Dorsolateral prefrontal cortex (tissue), 120 donors: ENCODE measurements at regions of chr4 and their contacts with region 1.

Region 1: DNA sequence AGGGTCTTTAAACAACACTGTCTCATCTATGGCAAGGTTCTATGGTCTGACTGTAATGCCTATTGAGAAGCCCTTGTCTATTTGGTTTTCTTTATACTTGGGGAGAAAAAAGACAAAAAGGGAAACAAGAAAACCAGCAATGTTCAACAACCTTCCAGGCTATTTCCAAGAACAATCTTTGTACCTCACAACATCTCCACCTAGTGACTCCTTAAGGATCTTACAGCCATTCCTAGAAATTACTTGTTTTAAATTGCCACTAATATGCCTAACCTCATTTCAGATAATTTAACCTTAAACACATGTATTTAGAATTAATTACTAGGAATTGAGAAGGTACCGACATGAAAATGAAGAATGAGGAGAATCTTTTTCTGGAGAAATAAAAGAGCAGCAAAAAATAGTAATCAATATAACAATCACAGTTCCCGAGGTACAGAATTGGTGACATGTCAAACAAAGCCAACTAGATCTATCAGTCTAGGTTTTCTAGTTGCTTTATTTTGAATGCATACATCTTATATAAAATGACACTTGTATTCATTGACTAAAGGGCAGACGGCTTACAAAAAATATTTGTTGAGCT is 1.6 kb upstream of the RBM46 start:
- DNase-seq: no peak
- H3K4me3 ChIP-seq: no peak overlapping the region
- H3K27ac ChIP-seq: no peak overlapping the region
- H3K27me3 ChIP-seq: peaks cover 0 to 27% (median 3%) of the 10 kb centered on the region in 45 donors
- CTCF ChIP-seq: peak in 55 of 56 donors; percentile 36 to 77 (median 60)

Region 2: GRCh38 chr4:153266988-153267387 is 1512.5 kb before region 1 on chr4:
- intact Hi-C with region 1: no loop called
- DNase-seq: no peak
- H3K4me3 ChIP-seq: no peak overlapping the region
- H3K27ac ChIP-seq: peak overlapping the region in 7 of 59 donors; percentile 3 to 65 (median 18)
- H3K27me3 ChIP-seq: no peaks in the 10 kb centered on the region
- CTCF ChIP-seq: no peak

Region 3: DNA sequence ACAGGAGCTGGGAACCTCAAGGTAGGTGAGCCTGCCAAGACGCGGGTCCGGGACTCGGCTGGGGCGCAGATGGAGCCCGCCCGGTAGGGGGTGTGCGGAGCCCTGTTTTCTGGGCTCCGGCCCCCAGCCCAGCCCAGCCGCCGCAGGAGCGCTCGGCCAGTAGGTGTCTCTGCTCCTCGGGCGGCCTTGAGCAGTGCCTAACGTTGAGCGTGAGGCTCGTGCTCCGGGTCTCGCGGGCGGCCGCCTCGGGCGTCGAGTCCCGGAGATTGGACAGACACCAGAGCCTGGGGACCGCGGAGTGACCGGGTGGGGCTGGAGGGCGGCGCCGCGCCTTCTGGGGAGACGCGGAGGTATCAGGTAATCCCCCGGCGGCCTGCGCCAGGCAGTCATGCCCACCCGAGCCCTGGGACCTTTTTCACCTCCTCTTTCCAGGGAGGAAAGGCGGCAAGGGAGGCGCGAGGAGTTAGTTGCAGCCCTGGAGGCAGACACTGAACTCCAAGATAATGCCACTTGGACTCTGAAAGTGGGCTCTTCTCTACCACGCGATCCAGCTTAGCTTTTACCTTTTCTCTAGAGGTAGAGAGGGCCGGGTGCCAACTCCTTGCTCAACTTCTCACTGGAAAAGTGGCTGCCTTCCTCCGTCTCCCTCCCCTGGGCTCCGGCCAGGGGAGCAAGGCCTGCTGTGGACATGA is 152.5 kb before region 1 on chr4:
- intact Hi-C with region 1: loop called in 1 of 2 experiments (anchors 10 kb)
- DNase-seq: peak in 7 of 10 donors; percentile 21 to 69 (median 41)
- H3K4me3 ChIP-seq: peak overlapping the region in 58 of 59 donors; percentile 9 to 69 (median 46)
- H3K27ac ChIP-seq: no peak overlapping the region
- H3K27me3 ChIP-seq: peaks cover 0 to 50% (median 7%) of the 10 kb centered on the region in 45 donors
- CTCF ChIP-seq: peak in 54 of 56 donors; percentile 14 to 77 (median 54)

Region 4: DNA sequence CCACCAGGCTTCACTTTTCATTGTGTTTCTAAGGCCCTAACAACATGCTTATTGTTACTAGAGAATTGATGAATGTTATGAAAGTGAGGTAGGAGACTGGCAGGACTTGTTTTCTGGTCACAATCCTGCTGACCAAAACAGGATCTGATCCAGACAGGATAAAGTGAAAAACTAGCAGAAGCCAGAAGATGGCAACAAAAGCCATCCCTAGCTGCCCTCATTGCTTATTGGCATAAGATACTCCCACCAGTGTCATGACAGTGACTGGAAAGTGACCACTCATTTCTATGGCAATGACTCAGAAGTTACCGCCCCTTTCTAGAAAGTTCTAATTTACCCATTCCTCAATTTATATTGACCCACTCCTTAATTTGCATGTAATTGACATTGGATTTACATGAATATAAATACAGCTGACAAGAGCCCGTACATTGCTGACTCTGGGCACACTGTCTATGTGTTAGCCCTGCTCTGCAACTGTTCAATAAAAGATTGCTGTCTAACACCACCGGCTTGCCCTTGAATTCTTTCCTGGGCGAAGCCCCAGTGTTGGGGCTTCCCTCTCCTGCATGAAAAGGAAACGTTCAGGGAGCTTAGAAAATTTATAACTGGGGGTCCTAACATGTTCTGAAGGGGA is 137.0 kb before region 1 on chr4:
- intact Hi-C with region 1: loop called in 1 of 2 experiments (anchors 5 kb)
- DNase-seq: no peak
- H3K4me3 ChIP-seq: no peak overlapping the region
- H3K27ac ChIP-seq: no peak overlapping the region
- H3K27me3 ChIP-seq: peaks cover 0 to 6% (median 0%) of the 10 kb centered on the region in 45 donors
- CTCF ChIP-seq: peak in 13 of 56 donors; percentile 8 to 48 (median 20)

Region 5: DNA sequence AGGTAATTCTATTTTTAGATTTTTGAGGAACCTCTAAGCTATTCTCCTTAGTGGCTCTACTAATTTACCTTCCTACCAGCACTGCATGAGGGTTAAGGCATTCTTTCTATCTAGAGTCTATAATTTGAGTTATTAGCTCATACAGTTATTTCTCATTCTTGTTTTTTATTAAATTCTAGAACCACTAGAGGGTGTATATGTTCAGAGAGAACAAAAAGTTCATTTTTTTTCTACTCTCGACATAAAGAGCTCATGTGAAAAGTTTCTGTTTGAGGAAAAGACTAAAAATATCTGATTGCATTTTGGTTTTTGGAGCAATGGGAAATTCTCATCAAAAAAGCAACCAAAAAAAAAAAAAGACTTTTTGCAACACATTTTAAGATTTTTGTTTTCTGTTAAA is 92.6 kb before region 1 on chr4:
- intact Hi-C with region 1: loop called in 1 of 2 experiments (anchors 5 kb)
- DNase-seq: no peak
- H3K4me3 ChIP-seq: no peak overlapping the region
- H3K27ac ChIP-seq: no peak overlapping the region
- H3K27me3 ChIP-seq: peaks cover 0 to 10% (median 0%) of the 10 kb centered on the region in 45 donors
- CTCF ChIP-seq: peak in 39 of 56 donors; percentile 11 to 62 (median 28)